ENCODE measurements at regions of chr6 and their contacts with region 1.

Region 1: GRCh38 chr6:71190809-71191208 is 97.8 kb upstream of the OGFRL1 start:
- DNase-seq: no peak
- ATAC-seq: no peak
- H3K4me3 ChIP-seq: no peak overlapping the region
- H3K27ac ChIP-seq: no peak overlapping the region
- H3K4me1 ChIP-seq: peaks cover 0 to 6% (median 0%) of the 10 kb centered on the region in 12 donors
- H3K27me3 ChIP-seq: no peaks in the 10 kb centered on the region
- CTCF ChIP-seq: peak in 11 of 12 donors; percentile 35 to 58 (median 43)
- POLR2A ChIP-seq: no peak

Region 2: DNA sequence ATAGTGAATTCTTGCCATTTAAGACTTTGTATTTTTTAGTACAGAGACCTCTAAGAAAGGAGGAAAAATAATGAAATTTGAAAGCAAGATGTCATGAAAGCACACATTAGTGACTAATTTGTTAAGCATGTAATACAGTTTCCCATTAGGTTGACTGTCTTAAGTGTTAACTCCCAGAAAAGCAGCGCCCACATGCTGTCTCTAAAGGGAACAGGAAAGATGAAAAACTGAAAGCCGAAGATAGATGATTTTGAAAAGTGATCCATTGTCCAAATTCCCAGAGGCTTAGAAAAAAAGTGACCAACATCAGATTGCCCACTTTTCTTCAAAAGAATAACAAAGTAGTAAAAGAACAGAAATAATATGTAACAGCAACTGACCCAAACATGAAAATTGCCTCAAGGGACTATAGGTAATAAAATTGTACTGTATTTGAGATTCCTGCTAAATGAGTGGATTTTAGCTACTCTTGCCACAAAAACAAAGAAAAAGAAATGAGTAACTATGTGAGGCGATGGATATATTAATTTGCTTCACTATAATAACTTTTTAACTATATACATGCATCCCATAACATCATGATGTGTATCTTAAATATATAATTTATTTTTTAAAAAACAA is 14.6 kb after region 1 on chr6:
- intact Hi-C with region 1: no loop called
- DNase-seq: no peak
- ATAC-seq: no peak
- H3K4me3 ChIP-seq: no peak overlapping the region
- H3K27ac ChIP-seq: no peak overlapping the region
- H3K4me1 ChIP-seq: no peaks in the 10 kb centered on the region
- H3K27me3 ChIP-seq: no peaks in the 10 kb centered on the region
- CTCF ChIP-seq: no peak
- POLR2A ChIP-seq: no peak

Region 3: DNA sequence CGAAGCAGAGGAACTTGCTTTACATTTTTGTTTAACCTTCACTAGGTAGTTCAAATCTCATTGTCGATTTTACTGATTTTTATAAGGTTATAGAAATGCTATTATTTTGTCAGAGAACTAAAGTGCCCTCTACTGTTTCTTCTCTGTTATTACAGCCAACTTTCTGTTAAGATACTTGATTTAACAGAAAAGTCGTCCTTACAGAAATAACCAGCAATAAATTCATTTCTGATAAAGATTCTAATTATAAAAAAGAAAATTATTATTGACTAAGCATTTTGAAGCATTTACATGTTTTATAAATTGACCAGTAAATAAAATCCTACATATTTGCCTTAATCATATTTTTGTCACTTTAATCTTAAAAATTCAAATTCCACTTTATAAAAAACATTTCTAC is 158.6 kb after region 1 on chr6:
- intact Hi-C with region 1: loop called (anchors 1 to 5 kb)
- DNase-seq: no peak
- ATAC-seq: peak in 1 of 4 donors; percentile 43
- H3K4me3 ChIP-seq: no peak overlapping the region
- H3K27ac ChIP-seq: peak overlapping the region in 9 of 12 donors; percentile 43 to 75 (median 57)
- H3K4me1 ChIP-seq: peaks cover 0 to 34% (median 18%) of the 10 kb centered on the region in 12 donors
- H3K27me3 ChIP-seq: no peaks in the 10 kb centered on the region
- CTCF ChIP-seq: peak; percentile 57 to 89 (median 75)
- POLR2A ChIP-seq: no peak

Region 4: GRCh38 chr6:71510057-71510713 is 319.4 kb after region 1 on chr6:
- intact Hi-C with region 1: loop called in 7 of 10 experiments (anchors 2 to 10 kb)
- DNase-seq: peak; percentile 39 to 57 (median 47)
- ATAC-seq: peak; percentile 69 to 94 (median 82)
- H3K4me3 ChIP-seq: no peak overlapping the region
- H3K27ac ChIP-seq: no peak overlapping the region
- H3K4me1 ChIP-seq: peaks cover 0 to 18% (median 4%) of the 10 kb centered on the region in 12 donors
- H3K27me3 ChIP-seq: no peaks in the 10 kb centered on the region
- CTCF ChIP-seq: peak; percentile 36 to 80 (median 68)
- POLR2A ChIP-seq: no peak

Measured in heart left ventricle (tissue), 16 donors.